Uterus (tissue), 4 donors: ENCODE measurements at regions of chr9 and their contacts with region 1.

Region 1: DNA sequence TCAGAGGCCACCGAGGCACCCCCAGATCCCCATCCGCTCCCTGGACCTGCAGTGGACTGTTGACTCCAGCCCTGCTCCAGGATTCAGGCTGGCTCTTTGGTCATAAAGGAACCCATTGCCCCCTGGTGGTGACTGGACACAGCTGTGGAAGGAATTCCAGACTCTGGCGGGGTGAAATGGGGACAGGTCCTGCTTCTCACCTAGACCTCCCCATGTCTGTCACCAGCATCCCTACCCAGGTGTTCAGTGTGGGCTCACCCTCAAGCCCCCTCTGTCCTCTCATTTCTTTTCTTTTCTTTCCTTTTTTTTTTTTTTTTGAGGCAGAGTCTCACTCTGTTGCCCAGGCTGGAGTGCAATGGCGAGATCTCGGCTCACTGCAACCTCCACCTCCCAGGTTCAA is 25.5 kb upstream of the STXBP1 start:
- DNase-seq: peak; percentile 79 to 89
- H3K4me3 ChIP-seq: no peak overlapping the region
- H3K27ac ChIP-seq: no peak overlapping the region
- H3K4me1 ChIP-seq: no peaks in the 10 kb centered on the region
- H3K27me3 ChIP-seq: no peaks in the 10 kb centered on the region
- CTCF ChIP-seq: peak; percentile 84 to 98 (median 91)
- POLR2A ChIP-seq: no peak

Region 2: DNA sequence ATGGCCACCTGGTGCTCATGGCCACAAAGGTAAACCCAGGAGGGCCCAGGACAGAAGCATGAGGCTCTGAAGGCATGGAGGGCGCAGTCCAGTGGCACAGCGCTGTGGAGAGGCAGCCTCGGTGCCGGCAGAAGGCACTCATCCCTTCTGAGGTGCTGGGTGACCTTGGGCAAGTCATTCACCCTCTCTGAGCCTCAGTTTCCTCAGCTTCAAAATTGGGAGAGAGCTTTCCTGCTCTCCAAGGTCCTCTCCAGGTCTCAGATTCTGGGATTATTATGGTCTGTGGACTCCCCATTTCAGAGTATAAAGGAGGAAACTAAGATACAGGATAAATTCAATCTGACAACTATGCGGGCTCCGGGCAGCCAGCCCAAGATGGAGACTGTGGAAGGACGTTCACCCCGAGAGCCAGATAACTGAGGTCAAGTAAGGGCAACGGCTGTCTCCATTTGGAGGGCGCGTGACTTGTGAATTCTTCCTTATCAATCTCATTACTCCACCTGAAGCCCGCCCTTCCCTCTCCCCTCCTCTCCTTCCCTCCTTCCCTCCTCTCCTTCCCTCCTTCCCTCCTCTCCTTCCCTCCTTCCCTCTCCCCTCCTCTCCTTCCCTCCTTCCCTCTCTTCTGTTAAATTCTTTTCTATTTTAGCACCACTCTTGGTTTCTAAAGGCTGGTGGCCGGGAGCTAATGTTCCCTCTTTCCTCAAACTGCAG is 77.1 kb before region 1 on chr9:
- intact Hi-C with region 1: loop called (anchors 2 kb)
- DNase-seq: no peak
- H3K4me3 ChIP-seq: no peak overlapping the region
- H3K27ac ChIP-seq: peak overlapping the region; percentile 66
- H3K4me1 ChIP-seq: no peaks in the 10 kb centered on the region
- H3K27me3 ChIP-seq: no peaks in the 10 kb centered on the region
- CTCF ChIP-seq: no peak
- POLR2A ChIP-seq: no peak

Region 3: GRCh38 chr9:127723450-127723849 is 136.9 kb after region 1 on chr9:
- intact Hi-C with region 1: loop called (anchors 10 kb)
- DNase-seq: no peak
- H3K4me3 ChIP-seq: no peak overlapping the region
- H3K27ac ChIP-seq: no peak overlapping the region
- H3K4me1 ChIP-seq: no peaks in the 10 kb centered on the region
- H3K27me3 ChIP-seq: no peaks in the 10 kb centered on the region
- CTCF ChIP-seq: no peak
- POLR2A ChIP-seq: no peak

Region 4: GRCh38 chr9:127734747-127735529 is 148.4 kb after region 1 on chr9 and contains the start of gene TOR2A:
- intact Hi-C with region 1: no loop called
- DNase-seq: peak; percentile 97 to 98
- H3K4me3 ChIP-seq: peak within 1 kb of the TSS; percentile 54 to 72
- H3K27ac ChIP-seq: peak within 1 kb of the TSS; percentile 92 to 96
- H3K4me1 ChIP-seq: no peaks in the 10 kb centered on the region
- H3K27me3 ChIP-seq: no peaks in the 10 kb centered on the region
- CTCF ChIP-seq: peak; percentile 88 to 100 (median 96)
- POLR2A ChIP-seq: peak; percentile 79 to 94
- total RNA-seq, gene TOR2A: 2.0 to 73.8 (median 7.0) TPM

Region 5: GRCh38 chr9:127809512-127810377 is 223.2 kb after region 1 on chr9:
- intact Hi-C with region 1: no loop called
- DNase-seq: no peak
- H3K4me3 ChIP-seq: no peak overlapping the region
- H3K27ac ChIP-seq: peak overlapping the region; percentile 12 to 63
- H3K4me1 ChIP-seq: peaks cover 0 to 3% of the 10 kb centered on the region in 2 donors
- H3K27me3 ChIP-seq: no peaks in the 10 kb centered on the region
- CTCF ChIP-seq: no peak
- POLR2A ChIP-seq: no peak